ENCODE measurements at regions of chr11 and their contacts with region 1.

Region 1: GRCh38 chr11:5380740-5381342 is 2.8 kb upstream of the OR51M1 start:
- DNase-seq: no peak

Region 2: DNA sequence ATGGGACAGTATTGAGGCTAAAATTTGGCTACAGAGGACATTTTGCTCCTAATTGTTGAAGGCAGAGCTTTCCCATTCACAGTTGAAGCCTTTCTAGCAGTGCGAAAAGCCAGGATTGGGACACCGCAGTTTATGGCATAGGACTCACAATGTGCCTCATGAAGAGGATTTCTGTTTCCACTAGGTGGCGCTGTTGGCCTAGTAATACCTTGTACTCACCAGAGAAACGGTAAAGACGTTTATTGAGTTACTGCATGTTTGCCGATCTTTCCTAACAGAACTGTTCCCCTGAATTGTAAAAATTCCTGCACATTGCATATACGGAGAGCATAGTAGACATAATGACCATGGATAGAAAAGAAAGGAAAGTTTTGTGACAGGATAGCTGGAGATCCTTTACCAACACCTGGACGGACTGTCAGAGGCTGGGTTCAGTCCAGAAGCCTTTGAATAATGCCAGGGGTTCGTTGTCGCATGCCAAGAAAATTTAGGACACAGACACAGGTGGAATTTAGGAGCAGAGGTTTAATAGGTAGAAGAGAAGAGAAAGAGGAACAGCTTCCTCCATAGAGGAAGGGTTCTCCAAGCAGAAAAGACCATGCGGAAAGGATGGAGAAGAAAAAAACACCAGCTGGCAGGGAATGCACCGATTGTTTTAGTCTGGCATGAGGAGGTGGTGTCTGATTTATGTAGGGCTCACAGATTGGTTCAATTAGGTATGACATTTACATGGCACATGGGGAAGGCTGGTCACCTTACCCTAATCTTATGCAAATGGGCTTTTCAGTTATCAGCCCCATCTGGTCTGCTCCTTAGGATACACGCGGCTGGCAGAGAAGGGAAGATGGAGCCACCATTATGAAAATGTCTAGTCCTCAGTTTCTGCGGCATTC is 754.4 kb before region 1 on chr11:
- intact Hi-C with region 1: loop called (anchors 10 kb)
- DNase-seq: no peak

Region 3: DNA sequence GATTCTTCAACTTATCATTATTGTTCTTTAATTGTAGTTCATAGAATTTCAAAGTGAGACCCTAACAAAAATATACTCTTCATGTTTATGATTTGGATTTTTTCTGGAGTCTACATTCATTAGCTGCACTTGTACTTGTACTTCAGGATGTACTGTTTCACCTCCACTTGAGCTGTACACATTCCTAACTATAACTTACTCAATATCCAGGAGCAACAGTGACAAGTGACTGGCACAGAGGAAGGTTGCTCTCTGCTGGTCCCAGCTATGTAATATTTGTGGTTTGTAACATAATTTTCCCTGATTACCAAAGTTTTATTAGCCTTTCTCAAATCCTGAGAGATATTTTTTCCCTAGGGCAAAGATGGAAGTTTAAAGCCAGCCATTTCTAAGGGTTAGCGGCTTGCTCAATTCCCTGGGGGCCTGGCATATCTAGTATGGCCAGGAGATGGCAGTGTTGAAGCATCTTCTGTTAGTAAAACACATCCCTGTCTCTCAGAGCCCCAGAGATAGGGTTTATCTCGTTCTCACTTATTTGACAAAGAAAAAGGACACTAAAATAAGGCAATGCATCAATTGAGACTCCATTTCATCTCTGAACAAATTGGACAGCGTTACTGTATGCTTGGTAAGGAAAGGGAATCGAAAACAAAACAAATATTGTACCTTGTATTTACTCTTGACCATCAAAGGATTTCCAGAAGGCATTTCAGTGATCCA is 256.9 kb before region 1 on chr11:
- intact Hi-C with region 1: loop called (anchors 2 kb)
- DNase-seq: no peak

Region 4: GRCh38 chr11:5204787-5205186 is 176.1 kb before region 1 on chr11:
- intact Hi-C with region 1: loop called (anchors 2 kb)
- DNase-seq: no peak